ENCODE measurements at regions of chr12 and their contacts with region 1.

Region 1: DNA sequence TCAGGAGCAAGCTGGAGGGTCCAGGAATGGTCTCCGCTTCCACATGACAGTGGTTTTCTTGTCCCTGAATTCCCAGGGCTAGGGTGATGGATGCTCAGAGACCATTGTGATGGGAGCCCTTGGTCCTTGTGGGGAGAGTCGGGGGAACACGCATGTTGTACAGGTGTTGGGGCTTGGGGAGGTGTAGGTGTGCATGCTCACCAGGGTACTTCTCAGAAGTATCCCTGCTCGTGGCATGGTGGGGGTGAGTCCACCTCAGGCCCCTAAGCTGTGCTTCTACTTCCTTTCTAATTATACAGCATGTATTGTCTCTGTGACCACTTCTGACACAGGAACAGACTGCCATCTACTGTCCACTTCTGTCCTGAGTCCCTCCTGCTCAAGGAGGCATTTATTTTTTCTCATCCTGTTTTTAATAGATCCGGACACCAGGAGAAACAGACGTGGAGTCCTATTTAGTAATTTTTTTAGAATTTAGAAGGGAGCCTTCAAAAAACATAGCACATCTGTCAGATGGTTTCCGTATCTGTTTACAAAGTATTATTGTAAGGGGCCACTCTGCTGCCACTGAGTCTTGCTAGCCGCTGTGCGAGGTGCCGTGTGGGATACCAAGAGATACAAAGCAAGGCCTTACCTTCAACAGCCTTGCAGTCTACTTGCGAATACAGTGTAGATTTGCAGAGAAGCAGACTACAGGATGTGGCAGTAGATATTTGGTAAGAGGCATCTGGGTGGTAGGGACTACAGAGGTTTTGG is 10.5 kb downstream of the NTF3 start:
- DNase-seq: peak in 1 of 5 donors; percentile 47
- ATAC-seq: peak; percentile 80 to 91 (median 84)
- H3K4me3 ChIP-seq: no peak overlapping the region
- H3K27ac ChIP-seq: no peak overlapping the region
- H3K4me1 ChIP-seq: peaks cover 0 to 31% (median 8%) of the 10 kb centered on the region in 12 donors
- H3K27me3 ChIP-seq: peaks cover 0 to 5% (median 0%) of the 10 kb centered on the region in 9 donors
- CTCF ChIP-seq: peak; percentile 55 to 84 (median 70)
- POLR2A ChIP-seq: no peak

Region 2: DNA sequence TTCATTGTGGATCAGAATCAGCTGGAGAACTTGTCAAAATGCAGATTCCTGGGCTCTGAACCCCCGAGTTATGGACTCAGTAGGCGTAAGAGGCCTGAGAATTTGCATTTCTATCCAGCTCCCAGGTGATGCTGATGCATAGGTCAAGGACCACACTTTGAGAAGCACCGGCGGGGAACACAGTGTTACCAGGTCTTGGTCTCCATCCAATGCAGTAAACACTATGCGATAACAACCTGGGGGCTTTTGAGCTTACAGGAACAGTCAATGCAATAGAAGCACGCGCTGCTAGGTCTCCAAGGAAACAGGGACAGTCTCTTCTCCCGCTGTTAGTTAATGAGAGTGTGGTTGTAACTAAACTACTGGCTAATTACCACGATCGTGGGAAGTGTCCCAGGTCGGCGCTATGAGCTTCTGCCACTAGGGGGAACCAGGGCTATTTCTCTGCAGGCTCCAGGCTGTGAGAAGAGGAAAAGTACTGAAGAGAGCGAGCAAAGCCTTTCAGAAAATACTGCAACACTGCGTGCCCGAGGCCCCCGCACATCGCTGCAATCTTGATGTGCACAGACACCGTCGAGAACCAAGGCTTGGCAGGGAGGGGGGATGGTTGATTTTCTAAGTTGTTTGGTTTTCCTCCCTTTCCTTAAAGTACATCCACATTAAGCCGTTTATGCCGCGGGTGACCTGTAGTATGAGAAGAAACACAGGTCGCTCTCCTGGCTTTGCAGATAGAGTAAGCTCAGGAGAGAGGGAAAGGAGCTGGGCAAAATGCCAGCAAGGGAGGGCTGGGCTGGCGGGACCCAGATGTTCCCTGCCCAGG is 584.7 kb before region 1 on chr12:
- intact Hi-C with region 1: loop called in 1 of 10 experiments (anchors 5 kb)
- DNase-seq: peak in 4 of 5 donors; percentile 63 to 66 (median 64)
- ATAC-seq: peak; percentile 68 to 86 (median 78)
- H3K4me3 ChIP-seq: peak overlapping the region in 7 of 12 donors; percentile 4 to 44 (median 26)
- H3K27ac ChIP-seq: peak overlapping the region in 3 of 12 donors; percentile 17 to 52 (median 20)
- H3K4me1 ChIP-seq: peaks cover 0 to 36% (median 12%) of the 10 kb centered on the region in 12 donors
- H3K27me3 ChIP-seq: peaks cover 0 to 10% (median 0%) of the 10 kb centered on the region in 9 donors
- CTCF ChIP-seq: peak; percentile 79 to 91 (median 88)
- POLR2A ChIP-seq: no peak

Region 3: DNA sequence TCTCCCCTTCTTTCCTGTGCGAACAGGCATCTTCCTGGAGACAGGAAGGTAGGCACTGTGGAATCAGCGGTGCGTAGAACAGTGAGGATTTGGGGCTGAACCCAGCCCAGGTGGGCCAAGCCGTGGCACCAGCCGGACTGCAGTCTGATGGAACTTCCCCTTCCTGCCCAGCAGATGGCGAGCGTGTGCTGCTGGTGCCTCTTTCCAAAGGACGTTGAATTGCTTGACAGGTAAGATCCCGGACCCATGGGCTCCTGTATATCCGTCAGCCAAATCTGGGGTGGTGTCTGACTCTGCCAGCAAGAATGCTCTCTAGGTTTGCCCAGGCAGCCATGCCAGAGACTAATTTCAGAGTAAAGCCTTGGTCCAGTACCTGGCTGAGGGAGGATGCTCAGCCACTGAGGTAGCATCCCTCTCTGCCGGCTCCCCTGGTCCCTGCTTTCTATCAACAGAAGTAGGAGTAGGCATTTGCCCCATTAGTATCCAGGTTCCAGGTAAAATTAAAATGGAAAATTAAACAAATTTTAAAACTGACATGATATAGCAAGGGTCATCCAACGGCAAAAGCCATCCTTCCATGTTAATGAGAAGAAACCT is 419.9 kb before region 1 on chr12:
- intact Hi-C with region 1: loop called in 6 of 10 experiments (anchors 5 to 10 kb)
- DNase-seq: peak in 4 of 5 donors; percentile 32 to 45 (median 43)
- ATAC-seq: peak; percentile 29 to 71 (median 44)
- H3K4me3 ChIP-seq: no peak overlapping the region
- H3K27ac ChIP-seq: no peak overlapping the region
- H3K4me1 ChIP-seq: peaks cover 0 to 24% (median 0%) of the 10 kb centered on the region in 12 donors
- H3K27me3 ChIP-seq: peaks cover 0 to 6% (median 0%) of the 10 kb centered on the region in 9 donors
- CTCF ChIP-seq: peak; percentile 87 to 98 (median 92)
- POLR2A ChIP-seq: no peak

Region 4: GRCh38 chr12:5171701-5172100 is 270.7 kb before region 1 on chr12:
- intact Hi-C with region 1: loop called in 4 of 10 experiments (anchors 1 to 5 kb)
- DNase-seq: peak in 2 of 5 donors; percentile 13 to 24
- ATAC-seq: peak in 2 of 4 donors; percentile 30 to 36
- H3K4me3 ChIP-seq: no peak overlapping the region
- H3K27ac ChIP-seq: peak overlapping the region in 1 of 12 donors; percentile 56
- H3K4me1 ChIP-seq: peaks cover 0 to 18% (median 8%) of the 10 kb centered on the region in 12 donors
- H3K27me3 ChIP-seq: peaks cover 0 to 5% (median 0%) of the 10 kb centered on the region in 9 donors
- CTCF ChIP-seq: peak in 11 of 12 donors; percentile 23 to 64 (median 50)
- POLR2A ChIP-seq: no peak

Region 5: DNA sequence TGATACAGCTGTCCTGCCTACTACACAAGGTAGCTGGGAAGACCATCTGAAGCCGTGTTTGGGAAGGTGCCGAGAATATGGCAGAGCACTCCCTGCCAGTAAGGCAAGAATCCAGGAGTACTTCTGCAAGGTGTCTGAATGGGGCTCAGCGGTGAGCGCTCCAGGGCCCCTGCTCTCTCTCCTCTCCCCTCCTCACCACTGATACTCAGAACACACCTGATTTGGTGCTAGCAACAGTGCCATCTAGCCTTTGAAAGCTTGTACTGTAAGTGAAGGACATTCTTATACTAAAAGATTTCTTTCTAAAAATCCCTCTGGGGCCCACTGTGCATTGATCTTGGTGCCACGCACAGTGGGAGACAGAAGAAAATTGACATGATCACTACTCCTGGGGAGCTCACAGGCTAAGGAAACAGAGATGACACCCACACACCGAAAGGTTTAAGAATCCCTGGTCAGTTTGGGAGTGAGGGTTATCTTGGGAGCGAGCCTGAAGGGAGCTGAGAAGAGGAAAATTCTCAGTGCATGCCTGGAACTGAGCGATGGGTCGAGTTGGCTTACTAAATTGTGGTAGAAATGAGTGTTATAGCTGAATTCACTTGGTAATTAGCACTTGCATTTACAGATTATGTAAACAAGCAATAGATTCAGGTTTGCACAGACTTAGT is 206.4 kb after region 1 on chr12:
- intact Hi-C with region 1: loop called in 4 of 10 experiments (anchors 5 to 10 kb)
- DNase-seq: no peak
- ATAC-seq: peak in 3 of 4 donors; percentile 71 to 75 (median 71)
- H3K4me3 ChIP-seq: no peak overlapping the region
- H3K27ac ChIP-seq: no peak overlapping the region
- H3K4me1 ChIP-seq: peaks cover 0 to 11% (median 0%) of the 10 kb centered on the region in 12 donors
- H3K27me3 ChIP-seq: peaks cover 0 to 14% (median 0%) of the 10 kb centered on the region in 9 donors
- CTCF ChIP-seq: peak; percentile 22 to 69 (median 50)
- POLR2A ChIP-seq: no peak

Measured in heart left ventricle (tissue), 16 donors.